IMR-90 (cell line): ENCODE measurements at regions of chr12 and their contacts with region 1.

Region 1: GRCh38 chr12:95059984-95060383 is 13.4 kb downstream of the NR2C1 start:
- DNase-seq: no peak
- ATAC-seq: no peak
- H3K4me3 ChIP-seq: no peak overlapping the region
- H3K27ac ChIP-seq: no peak overlapping the region
- H3K4me1 ChIP-seq: no peaks in the 10 kb centered on the region
- H3K27me3 ChIP-seq: no peaks in the 10 kb centered on the region
- CTCF ChIP-seq: no peak
- POLR2A ChIP-seq: no peak
- RAD21 ChIP-seq: no peak

Region 2: DNA sequence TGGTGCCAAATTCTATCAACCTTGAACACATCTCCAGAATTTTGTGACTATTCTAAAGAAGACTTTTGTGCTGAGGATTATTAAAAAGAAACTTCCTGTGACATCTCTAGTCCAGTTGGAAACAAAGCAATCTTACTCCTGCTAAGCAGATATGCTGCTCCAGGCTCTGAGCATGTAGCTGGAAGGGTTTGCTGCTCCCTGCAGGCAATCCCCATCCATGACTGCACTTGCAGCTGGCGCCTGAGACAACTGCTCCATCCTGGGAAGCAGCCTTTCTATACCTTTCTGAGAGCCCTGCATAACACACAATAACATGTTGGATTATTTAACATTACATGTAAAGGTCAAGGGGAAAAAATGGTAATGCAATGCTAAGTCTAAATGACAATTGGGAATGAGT is 161.6 kb before region 1 on chr12:
- CTCF ChIA-PET with region 1: no interaction called
- POLR2A ChIA-PET with region 1: no interaction called
- dilution Hi-C with region 1: no loop called
- in situ Hi-C with region 1: no loop called
- intact Hi-C with region 1: no loop called
- DNase-seq: no peak
- ATAC-seq: no peak
- H3K4me3 ChIP-seq: no peak overlapping the region
- H3K27ac ChIP-seq: no peak overlapping the region
- H3K4me1 ChIP-seq: no peaks in the 10 kb centered on the region
- H3K27me3 ChIP-seq: no peaks in the 10 kb centered on the region; the same call in none of the 2 replicates
- CTCF ChIP-seq: no peak
- POLR2A ChIP-seq: no peak
- RAD21 ChIP-seq: no peak

Region 3: DNA sequence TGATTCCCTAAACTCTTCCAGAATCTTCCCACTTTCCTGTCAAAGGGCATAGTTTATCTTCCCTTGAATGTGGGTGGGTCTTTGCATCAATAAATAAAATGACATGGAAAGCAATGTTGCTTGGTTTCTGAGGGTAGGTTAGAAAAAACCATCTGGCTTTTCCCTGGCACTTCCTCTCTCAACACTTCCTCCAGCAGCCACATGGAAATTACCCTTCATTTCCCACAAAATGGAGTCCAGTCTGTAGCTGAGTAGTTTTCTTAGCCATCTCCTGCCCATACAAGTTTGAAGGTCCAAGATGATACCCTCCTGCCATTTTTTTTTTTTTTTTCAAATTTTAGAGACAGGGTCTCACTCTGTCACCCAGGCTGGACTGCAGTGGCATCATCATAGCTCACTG is 45.4 kb before region 1 on chr12:
- CTCF ChIA-PET with region 1: no interaction called
- POLR2A ChIA-PET with region 1: no interaction called
- dilution Hi-C with region 1: no loop called
- in situ Hi-C with region 1: no loop called
- intact Hi-C with region 1: loop called (anchors 5 kb)
- DNase-seq: no peak
- ATAC-seq: no peak
- H3K4me3 ChIP-seq: no peak overlapping the region
- H3K27ac ChIP-seq: no peak overlapping the region
- H3K4me1 ChIP-seq: no peaks in the 10 kb centered on the region
- H3K27me3 ChIP-seq: no peaks in the 10 kb centered on the region
- CTCF ChIP-seq: no peak
- POLR2A ChIP-seq: no peak
- RAD21 ChIP-seq: no peak

Region 4: DNA sequence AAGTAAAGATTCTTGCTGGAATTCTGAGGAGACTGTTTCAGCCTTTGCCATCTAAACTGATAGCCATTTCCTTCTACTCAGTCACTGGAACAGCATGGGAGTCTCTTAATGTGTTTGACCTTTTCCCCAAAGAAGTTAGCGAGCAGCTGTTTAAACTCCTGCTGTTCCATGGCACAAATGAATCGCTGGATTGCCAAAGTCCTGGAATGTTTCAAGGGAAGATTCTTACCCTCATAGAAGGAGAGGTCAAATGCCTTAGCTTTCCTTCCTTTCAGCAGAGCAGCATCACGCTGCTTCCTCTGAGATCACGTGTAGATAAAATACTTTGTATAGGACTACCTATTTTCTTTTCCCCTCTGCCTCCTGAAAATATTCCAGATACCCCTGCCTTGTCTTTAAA is 24.0 kb after region 1 on chr12:
- CTCF ChIA-PET with region 1: no interaction called
- POLR2A ChIA-PET with region 1: no interaction called
- dilution Hi-C with region 1: no loop called
- in situ Hi-C with region 1: no loop called
- intact Hi-C with region 1: no loop called
- DNase-seq: peak; percentile 89
- ATAC-seq: peak; percentile 96
- H3K4me3 ChIP-seq: no peak overlapping the region
- H3K27ac ChIP-seq: peak overlapping the region; percentile 28; the same call in 1 of the 2 replicates
- H3K4me1 ChIP-seq: no peaks in the 10 kb centered on the region; the same call in 1 of the 2 replicates
- H3K27me3 ChIP-seq: no peaks in the 10 kb centered on the region
- CTCF ChIP-seq: no peak
- POLR2A ChIP-seq: no peak
- RAD21 ChIP-seq: no peak